H1 (cell line): ENCODE measurements at regions of chr5 and their contacts with region 1.

Region 1: DNA sequence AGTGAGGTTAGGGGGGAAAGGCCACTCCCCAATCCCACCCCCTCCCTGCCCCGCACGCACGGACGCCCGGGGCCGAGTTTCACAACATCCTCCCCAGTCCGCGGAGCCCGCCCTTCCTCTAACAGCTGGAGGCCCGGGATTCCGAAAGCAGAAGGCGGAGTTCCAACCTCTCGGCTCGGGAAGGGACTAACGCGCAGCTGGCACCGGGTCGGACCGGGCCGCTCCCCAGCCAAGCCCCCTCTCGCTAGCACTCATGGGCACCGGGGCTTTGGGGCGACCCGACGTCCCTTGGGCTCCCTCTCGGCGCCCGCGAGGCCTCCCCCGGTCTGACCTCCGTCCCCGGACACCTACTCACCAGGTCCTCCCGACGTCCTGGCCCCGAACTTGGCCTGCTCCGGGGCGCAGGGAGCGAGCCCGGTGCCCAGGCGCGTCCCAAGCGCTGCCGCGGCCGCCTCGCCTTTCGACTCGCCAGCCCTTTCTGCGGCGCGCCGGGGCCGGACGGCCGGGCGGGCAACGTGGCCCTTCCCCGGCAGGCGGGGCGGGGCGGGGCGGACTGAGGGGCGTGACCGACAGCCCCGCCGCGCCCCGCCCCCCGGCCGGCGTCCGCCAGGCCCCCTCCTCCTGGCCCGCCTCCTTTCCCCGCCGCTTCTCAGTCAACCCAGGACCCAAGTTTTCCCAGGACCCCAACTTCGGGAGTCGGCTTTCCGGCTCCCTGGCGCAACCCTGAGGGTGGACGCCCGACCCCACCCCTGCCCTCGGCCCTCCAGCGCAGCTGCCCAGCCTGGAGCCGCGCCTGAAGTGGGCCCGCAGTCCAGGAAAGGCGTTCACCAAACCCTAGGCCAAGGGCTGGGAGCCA is at the start of gene MGAT1:
- DNase-seq: peak in 1 of 2 experiments; percentile 90
- H3K4me3 ChIP-seq: peak within 1 kb of the TSS; percentile 70 to 95 (median 84)
- H3K27ac ChIP-seq: peak within 1 kb of the TSS; percentile 95
- H3K4me1 ChIP-seq: peaks cover 4 to 24% (median 16%) of the 10 kb centered on the region in 4 experiments
- H3K27me3 ChIP-seq: no peaks in the 10 kb centered on the region
- CTCF ChIP-seq: no peak
- EP300 ChIP-seq: no peak
- POLR2A ChIP-seq: peak in 1 of 2 experiments; percentile 68; a peak in 2 of 3 replicates
- RAD21 ChIP-seq: no peak
- total RNA-seq, gene MGAT1: 77.0 and 83.8 TPM in 2 replicates

Region 2: DNA sequence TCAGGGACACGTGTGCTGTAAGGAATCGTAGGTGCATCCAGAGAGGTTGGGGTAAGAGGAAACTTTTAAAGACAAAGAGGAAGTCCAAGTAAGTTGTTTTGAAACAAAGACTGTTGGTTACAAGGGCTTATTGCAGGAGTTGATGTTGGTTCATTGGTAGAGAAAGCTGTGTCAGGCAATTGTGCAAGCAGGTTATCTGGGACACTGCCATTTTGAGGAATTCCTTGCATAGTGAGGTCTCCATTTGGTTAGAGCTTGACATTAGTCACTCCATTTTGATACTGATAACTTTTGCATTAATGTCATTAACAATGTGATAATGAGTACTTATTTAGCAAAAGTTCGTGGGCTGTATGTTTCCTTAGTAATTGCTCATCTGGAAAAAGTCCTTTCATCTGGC is 283.5 kb before region 1 on chr5:
- CTCF ChIA-PET with region 1: no interaction called
- POLR2A ChIA-PET with region 1: no interaction called
- DNase-seq: no peak
- H3K4me3 ChIP-seq: no peak overlapping the region
- H3K27ac ChIP-seq: no peak overlapping the region
- H3K4me1 ChIP-seq: peaks cover 2 to 8% (median 7%) of the 10 kb centered on the region in 4 experiments; a peak in 5 of 7 replicates
- H3K27me3 ChIP-seq: no peaks in the 10 kb centered on the region
- CTCF ChIP-seq: no peak
- EP300 ChIP-seq: no peak
- POLR2A ChIP-seq: no peak
- RAD21 ChIP-seq: no peak

Region 3: GRCh38 chr5:180790011-180790410 is 12.5 kb before region 1 on chr5:
- CTCF ChIA-PET with region 1: interaction called, 99 read pairs
- POLR2A ChIA-PET with region 1: interaction called, 37 read pairs
- DNase-seq: peak in 1 of 2 experiments; percentile 67
- H3K4me3 ChIP-seq: no peak overlapping the region
- H3K27ac ChIP-seq: no peak overlapping the region
- H3K4me1 ChIP-seq: peaks cover 17 to 34% (median 25%) of the 10 kb centered on the region in 4 experiments
- H3K27me3 ChIP-seq: no peaks in the 10 kb centered on the region
- CTCF ChIP-seq: peak in 2 of 3 experiments; percentile 87 to 88; a peak in 3 of 4 replicates
- EP300 ChIP-seq: no peak
- POLR2A ChIP-seq: no peak
- RAD21 ChIP-seq: peak; percentile 59 to 67

Region 4: GRCh38 chr5:180848878-180849277 is 46.3 kb after region 1 on chr5:
- CTCF ChIA-PET with region 1: no interaction called
- POLR2A ChIA-PET with region 1: no interaction called
- DNase-seq: no peak
- H3K4me3 ChIP-seq: no peak overlapping the region
- H3K27ac ChIP-seq: no peak overlapping the region
- H3K4me1 ChIP-seq: peaks cover 0 to 7% (median 2%) of the 10 kb centered on the region in 4 experiments; a peak in 1 of 7 replicates
- H3K27me3 ChIP-seq: no peaks in the 10 kb centered on the region
- CTCF ChIP-seq: no peak
- EP300 ChIP-seq: no peak
- POLR2A ChIP-seq: no peak
- RAD21 ChIP-seq: no peak